ENCODE measurements at regions of chr2 and their contacts with region 1.

Region 1: DNA sequence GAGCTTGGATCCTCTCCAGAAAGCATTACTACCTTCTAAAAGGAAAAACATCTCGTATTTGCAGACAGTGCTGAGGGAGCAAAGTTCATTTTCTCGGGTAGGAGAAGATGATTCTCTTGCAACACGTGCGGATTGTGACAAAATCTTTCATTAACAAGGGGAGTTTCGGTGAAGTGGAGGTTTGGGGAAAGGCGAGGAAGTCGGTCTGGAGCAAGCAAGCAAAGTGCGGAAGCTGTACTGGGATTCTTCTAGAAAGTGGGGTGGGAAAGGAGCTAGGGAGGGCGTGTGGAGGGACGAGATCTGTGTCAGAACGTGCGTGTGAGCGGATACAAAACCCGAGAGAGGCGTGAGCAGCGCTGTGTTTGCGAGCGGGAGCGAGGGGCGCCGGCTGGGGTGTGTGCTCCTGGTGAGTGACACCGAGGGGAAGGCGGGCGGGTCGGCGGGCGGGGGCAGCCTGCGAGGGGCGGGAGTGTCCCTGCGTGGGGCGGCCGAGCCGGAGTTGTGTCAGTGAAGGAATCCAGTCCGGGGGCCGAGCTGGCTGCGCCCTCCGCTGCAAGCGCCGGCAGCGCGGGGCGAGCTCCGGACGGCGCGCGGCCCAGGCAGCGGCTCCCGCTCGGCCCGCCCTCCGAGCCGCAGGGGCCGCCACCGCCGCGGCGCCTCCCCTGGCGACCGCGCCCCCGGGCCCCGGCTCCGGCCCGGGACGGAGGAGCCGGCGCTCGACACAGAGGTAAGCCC is at the start of gene SPATS2L:
- DNase-seq: peak; percentile 75
- ATAC-seq: peak; percentile 71
- H3K4me3 Mint-ChIP-seq: peak within 1 kb of the TSS; percentile 80
- H3K27ac Mint-ChIP-seq: peak within 1 kb of the TSS; percentile 87
- H3K4me1 Mint-ChIP-seq: peaks cover 21% of the 10 kb centered on the region
- H3K27me3 Mint-ChIP-seq: peaks cover 18% of the 10 kb centered on the region
- total RNA-seq, gene SPATS2L: 14.7 to 25.8 TPM

Region 2: GRCh38 chr2:199160677-199161465 is 1145.5 kb before region 1 on chr2:
- CTCF ChIA-PET with region 1: no interaction called
- POLR2A ChIA-PET with region 1: no interaction called
- intact Hi-C with region 1: no loop called
- DNase-seq: no peak
- ATAC-seq: no peak
- H3K4me3 Mint-ChIP-seq: no peak overlapping the region
- H3K27ac Mint-ChIP-seq: no peak overlapping the region
- H3K4me1 Mint-ChIP-seq: no peaks in the 10 kb centered on the region
- H3K27me3 Mint-ChIP-seq: no peaks in the 10 kb centered on the region

Region 3: DNA sequence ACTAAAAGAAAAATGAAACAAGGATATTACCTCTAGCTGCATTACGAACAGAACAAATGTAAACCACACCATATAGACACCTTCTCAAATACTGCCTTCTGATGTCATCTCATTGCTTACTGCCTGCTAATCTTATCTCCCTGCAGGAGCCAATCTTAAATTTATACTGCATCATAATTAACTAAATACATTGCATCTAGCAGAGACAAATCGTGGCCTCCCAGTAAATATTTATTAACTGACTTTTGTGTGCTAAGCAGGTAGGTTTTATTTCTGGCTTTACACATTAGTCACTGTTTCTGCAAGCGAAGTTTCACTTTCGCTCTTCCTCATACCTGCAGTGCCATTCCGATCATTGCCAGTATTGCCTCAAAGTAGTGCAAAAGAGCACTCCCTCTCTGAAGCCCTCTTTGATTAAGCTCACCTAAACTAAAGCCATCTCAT is 67.6 kb after region 1 on chr2:
- CTCF ChIA-PET with region 1: no interaction called
- POLR2A ChIA-PET with region 1: no interaction called
- intact Hi-C with region 1: loop called (anchors 2 to 5 kb)
- DNase-seq: peak; percentile 57
- ATAC-seq: peak; percentile 92
- H3K4me3 Mint-ChIP-seq: peak overlapping the region; percentile 67
- H3K27ac Mint-ChIP-seq: peak overlapping the region; percentile 79
- H3K4me1 Mint-ChIP-seq: peaks cover 46% of the 10 kb centered on the region
- H3K27me3 Mint-ChIP-seq: no peaks in the 10 kb centered on the region

Region 4: GRCh38 chr2:200422532-200423261 is 116.3 kb after region 1 on chr2:
- CTCF ChIA-PET with region 1: no interaction called
- POLR2A ChIA-PET with region 1: no interaction called
- intact Hi-C with region 1: no loop called
- DNase-seq: no peak
- ATAC-seq: peak; percentile 49
- H3K4me3 Mint-ChIP-seq: no peak overlapping the region
- H3K27ac Mint-ChIP-seq: no peak overlapping the region
- H3K4me1 Mint-ChIP-seq: peaks cover 10% of the 10 kb centered on the region
- H3K27me3 Mint-ChIP-seq: no peaks in the 10 kb centered on the region

Region 5: DNA sequence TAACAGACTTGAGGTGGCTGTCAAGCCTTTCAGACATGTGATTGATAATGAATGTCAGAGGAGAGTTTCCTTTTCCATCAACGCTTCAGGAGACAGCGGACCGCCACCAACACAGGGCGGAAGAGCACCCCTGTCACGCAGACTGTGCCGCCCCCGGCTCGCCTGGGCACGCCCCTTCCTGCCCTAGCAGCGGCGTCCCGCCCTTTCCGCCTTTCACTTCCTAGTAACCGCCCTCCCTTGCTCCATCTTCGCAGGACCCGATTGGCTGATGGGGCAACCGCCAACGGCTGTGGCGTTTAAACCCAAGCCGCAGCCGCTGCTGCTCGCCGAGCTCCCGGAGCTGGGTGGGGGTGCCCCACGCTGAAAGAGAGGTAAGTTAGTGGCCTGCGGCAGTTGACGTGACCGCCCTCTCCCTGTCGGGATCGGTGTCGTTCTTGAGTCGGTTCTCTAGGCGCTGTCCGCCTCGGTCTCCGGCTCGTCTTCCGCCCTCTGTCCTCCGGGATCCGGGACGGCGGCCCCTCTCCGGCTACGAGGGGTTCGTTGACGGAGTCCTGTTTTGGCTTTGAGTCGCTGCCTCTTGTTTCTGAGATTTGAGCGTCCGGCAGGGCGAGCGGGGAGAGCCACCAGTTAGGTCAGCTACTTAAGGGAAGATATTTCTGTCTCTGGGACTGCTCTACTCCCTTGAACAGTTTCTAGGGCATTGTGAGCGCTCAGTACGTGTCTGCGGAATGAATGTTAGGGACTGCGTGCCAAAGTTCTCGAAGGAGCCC is 219.7 kb after region 1 on chr2 and contains the start of gene SGO2:
- CTCF ChIA-PET with region 1: no interaction called
- POLR2A ChIA-PET with region 1: no interaction called
- intact Hi-C with region 1: loop called in 1 of 2 experiments (anchors 5 kb)
- DNase-seq: peak; percentile 98
- ATAC-seq: peak; percentile 99
- H3K4me3 Mint-ChIP-seq: peak within 1 kb of the TSS; percentile 97
- H3K27ac Mint-ChIP-seq: peak within 1 kb of the TSS; percentile 90
- H3K4me1 Mint-ChIP-seq: peaks cover 23% of the 10 kb centered on the region
- H3K27me3 Mint-ChIP-seq: no peaks in the 10 kb centered on the region
- total RNA-seq, gene SGO2: 49.9 to 56.7 TPM

Measured in activated CD4-positive, alpha-beta T cell treated with anti-CD3 and anti-CD28 coated beads for 36 hours (primary cell).